PC-9 (cell line): ENCODE measurements at regions of chr6 and their contacts with region 1.

Region 1: DNA sequence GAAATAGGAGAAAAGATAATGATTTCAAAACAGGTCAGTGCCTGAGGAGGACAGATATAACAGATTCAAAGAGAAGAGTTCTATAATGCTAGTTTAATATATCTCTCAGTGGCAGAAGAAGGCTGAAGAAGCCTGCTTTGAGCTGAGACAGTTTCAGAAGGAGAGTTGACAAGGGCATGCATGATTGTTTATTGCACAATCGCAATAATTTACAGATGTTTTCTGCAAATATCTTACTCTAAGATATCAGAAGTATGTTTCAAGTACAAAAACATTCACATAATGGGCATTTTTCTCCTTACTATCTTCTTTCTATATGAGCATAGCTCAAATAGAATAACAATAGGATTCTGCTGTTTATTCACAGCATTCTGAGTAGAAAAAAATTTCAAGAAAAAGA is 557.7 kb upstream of the NRSN1 start:
- DNase-seq: no peak
- H3K4me3 ChIP-seq: no peak overlapping the region
- H3K27ac ChIP-seq: no peak overlapping the region
- H3K4me1 ChIP-seq: no peaks in the 10 kb centered on the region
- H3K27me3 ChIP-seq: no peaks in the 10 kb centered on the region
- CTCF ChIP-seq: no peak

Region 2: DNA sequence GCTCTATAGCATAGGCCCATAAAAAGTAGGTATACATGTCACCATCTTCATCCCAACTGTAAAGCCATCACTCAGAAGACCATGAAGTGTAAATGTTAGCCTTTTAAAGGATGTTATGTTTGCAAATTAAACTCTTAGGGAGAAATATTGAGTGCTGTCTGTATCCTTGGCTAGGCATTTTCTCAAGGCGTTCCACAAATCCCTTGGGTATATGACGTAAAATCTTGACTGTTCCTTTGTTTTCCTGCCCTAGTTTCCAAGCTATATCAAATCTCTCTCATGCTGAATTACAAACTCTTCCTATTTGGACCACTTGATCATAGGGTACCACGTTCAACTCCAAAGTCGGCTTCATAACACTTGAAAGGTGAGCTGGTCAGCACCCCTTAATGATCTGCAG is 512.8 kb before region 1 on chr6:
- CTCF ChIA-PET with region 1: interaction called, 10 read pairs
- POLR2A ChIA-PET with region 1: no interaction called
- intact Hi-C with region 1: no loop called
- DNase-seq: no peak
- H3K4me3 ChIP-seq: no peak overlapping the region
- H3K27ac ChIP-seq: no peak overlapping the region
- H3K4me1 ChIP-seq: no peaks in the 10 kb centered on the region
- H3K27me3 ChIP-seq: no peaks in the 10 kb centered on the region
- CTCF ChIP-seq: no peak

Region 3: DNA sequence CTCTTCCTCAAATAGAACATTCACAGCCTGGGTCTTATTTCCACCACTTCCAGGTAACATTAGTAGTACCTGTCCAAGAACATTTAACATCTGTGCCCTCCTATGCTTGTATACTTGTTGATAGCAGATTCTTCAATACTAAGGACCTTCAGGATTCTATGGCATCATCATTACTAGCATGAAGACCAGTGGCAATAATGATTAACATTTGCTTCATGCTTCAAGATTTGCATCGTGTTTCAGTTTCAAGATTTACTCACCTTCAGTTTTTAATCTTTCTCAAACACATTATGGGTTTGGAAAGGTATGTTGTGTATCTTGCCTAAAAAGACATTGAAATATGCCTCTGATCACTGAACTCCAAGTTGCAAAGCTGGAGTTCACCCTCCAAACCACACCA is 144.9 kb after region 1 on chr6:
- CTCF ChIA-PET with region 1: no interaction called
- POLR2A ChIA-PET with region 1: no interaction called
- intact Hi-C with region 1: no loop called
- DNase-seq: no peak
- H3K4me3 ChIP-seq: no peak overlapping the region
- H3K27ac ChIP-seq: no peak overlapping the region
- H3K4me1 ChIP-seq: no peaks in the 10 kb centered on the region
- H3K27me3 ChIP-seq: no peaks in the 10 kb centered on the region
- CTCF ChIP-seq: no peak